Naive thymus-derived CD4-positive, alpha-beta T cell (primary cell): ENCODE measurements at regions of chr18 and their contacts with region 1.

Region 1: GRCh38 chr18:41197967-41198366 is 757.1 kb upstream of the PIK3C3 start:
- DNase-seq: no peak
- ATAC-seq: no peak
- H3K4me3 ChIP-seq: no peak overlapping the region
- H3K4me3 Mint-ChIP-seq: no peak overlapping the region
- H3K27ac ChIP-seq: no peak overlapping the region
- H3K27ac Mint-ChIP-seq: no peak overlapping the region
- H3K4me1 ChIP-seq: no peaks in the 10 kb centered on the region
- H3K4me1 Mint-ChIP-seq: no peaks in the 10 kb centered on the region
- H3K27me3 ChIP-seq: no peaks in the 10 kb centered on the region
- H3K27me3 Mint-ChIP-seq: no peaks in the 10 kb centered on the region

Region 2: GRCh38 chr18:40124107-40124506 is 1073.9 kb before region 1 on chr18:
- CTCF ChIA-PET with region 1: no interaction called
- POLR2A ChIA-PET with region 1: no interaction called
- intact Hi-C with region 1: no loop called
- DNase-seq: no peak
- ATAC-seq: no peak
- H3K4me3 ChIP-seq: no peak overlapping the region
- H3K4me3 Mint-ChIP-seq: no peak overlapping the region
- H3K27ac ChIP-seq: no peak overlapping the region
- H3K27ac Mint-ChIP-seq: no peak overlapping the region
- H3K4me1 ChIP-seq: no peaks in the 10 kb centered on the region
- H3K4me1 Mint-ChIP-seq: no peaks in the 10 kb centered on the region
- H3K27me3 ChIP-seq: no peaks in the 10 kb centered on the region
- H3K27me3 Mint-ChIP-seq: no peaks in the 10 kb centered on the region

Region 3: GRCh38 chr18:40851014-40851429 is 346.9 kb before region 1 on chr18:
- CTCF ChIA-PET with region 1: no interaction called
- POLR2A ChIA-PET with region 1: no interaction called
- intact Hi-C with region 1: no loop called
- DNase-seq: no peak
- ATAC-seq: no peak
- H3K4me3 ChIP-seq: no peak overlapping the region
- H3K4me3 Mint-ChIP-seq: no peak overlapping the region
- H3K27ac ChIP-seq: no peak overlapping the region
- H3K27ac Mint-ChIP-seq: no peak overlapping the region
- H3K4me1 ChIP-seq: no peaks in the 10 kb centered on the region
- H3K4me1 Mint-ChIP-seq: no peaks in the 10 kb centered on the region
- H3K27me3 ChIP-seq: no peaks in the 10 kb centered on the region
- H3K27me3 Mint-ChIP-seq: no peaks in the 10 kb centered on the region

Region 4: DNA sequence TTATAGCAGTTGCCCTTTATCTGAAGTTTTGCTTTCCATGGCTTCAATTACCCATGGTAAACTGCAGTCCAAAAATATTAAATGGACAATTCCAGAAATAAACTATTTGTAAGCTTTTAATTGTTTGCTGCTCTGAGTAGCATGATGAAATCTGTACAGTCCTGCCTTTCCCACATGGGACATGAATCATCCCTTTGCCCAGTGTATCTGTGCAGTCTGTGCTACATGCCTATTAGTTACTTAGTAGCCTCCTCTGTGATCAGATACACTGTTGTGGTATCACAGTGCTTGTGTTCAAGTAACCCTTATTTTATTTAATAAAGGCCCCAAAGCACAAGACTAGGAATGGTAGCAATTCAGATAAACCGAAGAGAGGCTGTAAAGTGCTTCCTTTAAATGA is 53.5 kb before region 1 on chr18:
- CTCF ChIA-PET with region 1: no interaction called
- POLR2A ChIA-PET with region 1: no interaction called
- intact Hi-C with region 1: loop called in 1 of 2 experiments (anchors 5 kb)
- DNase-seq: no peak
- ATAC-seq: no peak
- H3K4me3 ChIP-seq: no peak overlapping the region
- H3K4me3 Mint-ChIP-seq: no peak overlapping the region
- H3K27ac ChIP-seq: no peak overlapping the region
- H3K27ac Mint-ChIP-seq: no peak overlapping the region
- H3K4me1 ChIP-seq: no peaks in the 10 kb centered on the region
- H3K4me1 Mint-ChIP-seq: no peaks in the 10 kb centered on the region
- H3K27me3 ChIP-seq: no peaks in the 10 kb centered on the region
- H3K27me3 Mint-ChIP-seq: no peaks in the 10 kb centered on the region